Colonic mucosa (tissue), 4 donors: ENCODE measurements at regions of chr6 and their contacts with region 1.

Region 1: DNA sequence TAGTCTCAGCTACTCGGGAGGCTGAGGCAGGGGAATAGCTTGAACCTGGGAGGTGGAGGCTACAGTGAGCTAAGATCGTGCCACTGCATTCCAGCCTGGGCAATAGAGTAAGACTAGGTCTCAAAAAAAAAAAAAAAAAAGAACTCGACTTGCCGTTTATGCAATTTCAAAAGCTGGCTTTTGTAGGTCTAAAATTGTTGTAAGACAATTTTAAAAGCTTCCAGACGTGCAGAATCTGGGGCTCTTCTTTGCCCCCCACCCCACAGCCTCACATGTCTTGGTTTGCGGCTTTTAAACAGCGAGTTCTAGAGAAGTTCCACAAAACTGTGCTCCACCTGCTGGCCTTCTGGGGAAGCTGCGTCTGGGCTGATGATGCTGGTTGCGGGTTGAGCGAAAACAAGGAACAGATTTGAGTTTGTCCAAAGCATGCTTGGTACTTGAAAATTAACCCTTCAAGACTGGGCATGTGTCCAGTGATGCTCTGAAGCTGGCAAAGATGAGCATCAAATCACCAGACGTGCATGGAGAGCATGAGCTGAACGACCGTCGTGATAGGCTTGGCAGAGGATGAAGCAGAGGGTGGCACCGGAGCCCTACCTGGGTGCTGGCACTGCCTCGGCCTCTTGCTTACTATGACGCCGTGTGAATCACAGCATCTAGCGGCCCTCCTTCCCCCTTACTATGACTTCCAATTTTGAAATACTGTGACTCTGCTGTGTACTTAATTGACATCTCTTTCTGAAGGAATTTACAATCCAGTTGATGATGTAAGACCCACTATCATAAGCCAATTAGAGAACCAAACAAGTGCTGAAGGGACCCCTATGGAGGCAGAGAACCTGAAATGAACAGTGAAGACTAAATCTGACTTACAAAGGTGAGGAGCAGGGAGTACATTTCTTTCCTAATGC is 171.4 kb downstream of the GMPR start:
- DNase-seq: peak; percentile 69
- H3K4me3 ChIP-seq: no peak overlapping the region
- H3K27ac ChIP-seq: no peak overlapping the region
- H3K4me1 ChIP-seq: no peaks in the 10 kb centered on the region
- H3K27me3 ChIP-seq: no peaks in the 10 kb centered on the region
- CTCF ChIP-seq: peak; percentile 72

Region 2: GRCh38 chr6:16238057-16238962 is 171.5 kb before region 1 on chr6 and contains the start of gene GMPR:
- intact Hi-C with region 1: loop called (anchors 10 kb)
- DNase-seq: peak; percentile 86
- H3K4me3 ChIP-seq: peak within 1 kb of the TSS; percentile 43
- H3K27ac ChIP-seq: peak within 1 kb of the TSS; percentile 28
- H3K4me1 ChIP-seq: no peaks in the 10 kb centered on the region
- H3K27me3 ChIP-seq: no peaks in the 10 kb centered on the region
- CTCF ChIP-seq: no peak
- total RNA-seq, gene GMPR: 3.4 to 4.7 TPM

Region 3: GRCh38 chr6:16326531-16326930 is 83.3 kb before region 1 on chr6:
- intact Hi-C with region 1: no loop called
- DNase-seq: no peak
- H3K4me3 ChIP-seq: no peak overlapping the region
- H3K27ac ChIP-seq: no peak overlapping the region
- H3K4me1 ChIP-seq: peaks cover under 1% of the 10 kb centered on the region
- H3K27me3 ChIP-seq: no peaks in the 10 kb centered on the region
- CTCF ChIP-seq: no peak

Region 4: GRCh38 chr6:16345437-16346330 is 64.1 kb before region 1 on chr6:
- intact Hi-C with region 1: no loop called
- DNase-seq: no peak
- H3K4me3 ChIP-seq: no peak overlapping the region
- H3K27ac ChIP-seq: no peak overlapping the region
- H3K4me1 ChIP-seq: no peaks in the 10 kb centered on the region
- H3K27me3 ChIP-seq: no peaks in the 10 kb centered on the region
- CTCF ChIP-seq: no peak

Region 5: GRCh38 chr6:16670183-16670582 is 260.4 kb after region 1 on chr6:
- intact Hi-C with region 1: no loop called
- DNase-seq: no peak
- H3K4me3 ChIP-seq: no peak overlapping the region
- H3K27ac ChIP-seq: no peak overlapping the region
- H3K4me1 ChIP-seq: no peaks in the 10 kb centered on the region
- H3K27me3 ChIP-seq: no peaks in the 10 kb centered on the region
- CTCF ChIP-seq: no peak

Region 6: DNA sequence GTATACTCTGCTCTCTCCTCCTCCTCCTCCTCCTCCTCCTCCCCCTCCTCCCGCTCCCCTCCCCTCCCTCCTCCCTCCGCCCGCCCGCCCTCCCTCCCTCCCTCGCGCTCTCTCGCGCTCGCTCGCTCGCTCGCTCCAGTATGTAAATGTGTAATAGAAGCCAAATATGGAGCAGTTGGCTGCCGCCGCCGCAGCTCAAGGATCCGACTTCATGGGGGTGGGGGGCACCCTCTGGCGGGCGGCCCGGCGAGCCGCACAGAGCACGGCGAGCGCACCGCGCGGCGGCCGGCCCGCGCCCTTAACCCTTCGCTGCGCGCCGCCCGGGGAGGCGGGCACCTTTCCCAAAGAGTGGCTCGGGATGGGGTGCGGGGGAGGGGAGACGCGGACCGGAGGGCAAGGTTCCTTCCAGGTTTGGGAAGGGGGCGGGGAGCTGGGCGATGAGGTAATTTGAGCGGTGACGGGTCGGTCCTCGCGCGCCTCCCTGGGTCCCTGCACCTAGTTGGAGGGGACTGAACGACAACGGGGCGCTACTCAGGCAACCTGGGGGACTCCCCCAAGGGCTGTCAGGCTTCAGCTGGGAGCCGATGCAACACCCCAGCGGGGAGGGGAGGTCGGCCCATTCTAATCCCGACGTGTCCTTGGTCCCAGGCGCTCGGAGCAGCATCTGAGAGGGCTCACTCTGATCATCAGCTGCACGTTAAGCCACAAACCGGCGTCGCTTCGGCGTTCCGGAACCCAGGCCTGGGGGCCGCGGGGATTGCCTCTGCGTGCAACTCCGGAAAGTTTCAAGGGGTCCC is 351.9 kb after region 1 on chr6:
- intact Hi-C with region 1: loop called (anchors 5 kb)
- DNase-seq: peak; percentile 94
- H3K4me3 ChIP-seq: peak overlapping the region; percentile 80
- H3K27ac ChIP-seq: peak overlapping the region; percentile 97
- H3K4me1 ChIP-seq: peaks cover 8% of the 10 kb centered on the region
- H3K27me3 ChIP-seq: no peaks in the 10 kb centered on the region
- CTCF ChIP-seq: no peak

Region 7: GRCh38 chr6:17653198-17653882 is 1243.6 kb after region 1 on chr6:
- intact Hi-C with region 1: no loop called
- DNase-seq: no peak
- H3K4me3 ChIP-seq: no peak overlapping the region
- H3K27ac ChIP-seq: no peak overlapping the region
- H3K4me1 ChIP-seq: peaks cover 4% of the 10 kb centered on the region
- H3K27me3 ChIP-seq: no peaks in the 10 kb centered on the region
- CTCF ChIP-seq: no peak